ENCODE measurements at regions of chr14 and their contacts with region 1.

Region 1: GRCh38 chr14:26984311-26985177 is 386.7 kb upstream of the NOVA1 start:
- DNase-seq: peak; percentile 78
- ATAC-seq: peak; percentile 90
- H3K4me3 ChIP-seq: no peak overlapping the region
- H3K27ac ChIP-seq: no peak overlapping the region
- H3K4me1 ChIP-seq: no peaks in the 10 kb centered on the region
- H3K27me3 ChIP-seq: peaks cover 19% of the 10 kb centered on the region
- CTCF ChIP-seq: peak; percentile 93

Region 2: GRCh38 chr14:26730929-26731618 is 253.5 kb before region 1 on chr14:
- CTCF ChIA-PET with region 1: no interaction called
- POLR2A ChIA-PET with region 1: no interaction called
- intact Hi-C with region 1: loop called (anchors 5 kb)
- DNase-seq: peak; percentile 41
- ATAC-seq: peak; percentile 70
- H3K4me3 ChIP-seq: no peak overlapping the region
- H3K27ac ChIP-seq: no peak overlapping the region
- H3K4me1 ChIP-seq: no peaks in the 10 kb centered on the region
- H3K27me3 ChIP-seq: no peaks in the 10 kb centered on the region
- CTCF ChIP-seq: peak; percentile 82

Region 3: DNA sequence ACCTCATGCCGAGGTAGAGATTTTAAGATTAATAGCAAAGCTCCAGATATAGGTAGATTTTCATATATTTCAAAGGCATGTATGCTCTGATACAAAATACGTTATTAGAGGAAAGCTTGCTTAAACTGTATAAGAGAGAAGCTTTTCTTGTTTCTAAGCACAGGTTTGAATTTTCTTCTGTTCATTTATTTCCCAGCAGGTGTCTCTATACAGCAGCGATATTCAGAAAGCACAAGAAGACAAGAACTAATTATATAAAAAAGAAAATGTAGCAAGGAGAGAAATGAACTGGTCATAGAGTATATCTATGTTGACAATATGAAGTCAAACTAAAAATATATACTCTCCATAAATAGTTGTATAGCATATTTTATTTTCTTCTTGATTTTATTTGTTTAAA is 79.3 kb before region 1 on chr14:
- CTCF ChIA-PET with region 1: interaction called, 3 read pairs
- POLR2A ChIA-PET with region 1: no interaction called
- intact Hi-C with region 1: loop called (anchors 2 kb)
- DNase-seq: peak; percentile 13
- ATAC-seq: peak; percentile 45; the same call in 1 of the 2 replicates
- H3K4me3 ChIP-seq: no peak overlapping the region
- H3K27ac ChIP-seq: no peak overlapping the region
- H3K4me1 ChIP-seq: no peaks in the 10 kb centered on the region
- H3K27me3 ChIP-seq: no peaks in the 10 kb centered on the region
- CTCF ChIP-seq: no peak; the same call in 1 of the 2 replicates

Region 4: DNA sequence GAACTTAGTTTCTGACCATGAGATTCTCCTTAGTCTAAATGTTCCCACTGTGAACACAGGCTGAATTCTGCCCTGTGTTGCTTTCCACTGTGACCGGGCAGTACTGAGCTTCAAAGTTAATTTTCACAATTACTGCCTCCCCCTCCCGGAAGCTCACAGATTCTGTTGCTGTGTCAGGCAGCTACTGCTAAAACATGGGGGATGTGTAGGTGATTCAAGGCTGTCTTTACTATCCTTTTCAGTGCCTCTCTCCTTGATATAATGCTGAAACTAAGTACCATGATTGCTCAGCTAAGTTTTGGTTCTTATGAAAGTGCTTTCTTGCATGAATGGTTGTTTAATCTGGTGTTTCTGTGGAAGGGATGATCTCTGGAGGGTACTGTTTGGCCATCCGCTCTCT is 41.6 kb after region 1 on chr14:
- CTCF ChIA-PET with region 1: no interaction called
- POLR2A ChIA-PET with region 1: no interaction called
- intact Hi-C with region 1: no loop called
- DNase-seq: no peak
- ATAC-seq: no peak
- H3K4me3 ChIP-seq: no peak overlapping the region
- H3K27ac ChIP-seq: no peak overlapping the region
- H3K4me1 ChIP-seq: no peaks in the 10 kb centered on the region
- H3K27me3 ChIP-seq: no peaks in the 10 kb centered on the region
- CTCF ChIP-seq: no peak

Region 5: DNA sequence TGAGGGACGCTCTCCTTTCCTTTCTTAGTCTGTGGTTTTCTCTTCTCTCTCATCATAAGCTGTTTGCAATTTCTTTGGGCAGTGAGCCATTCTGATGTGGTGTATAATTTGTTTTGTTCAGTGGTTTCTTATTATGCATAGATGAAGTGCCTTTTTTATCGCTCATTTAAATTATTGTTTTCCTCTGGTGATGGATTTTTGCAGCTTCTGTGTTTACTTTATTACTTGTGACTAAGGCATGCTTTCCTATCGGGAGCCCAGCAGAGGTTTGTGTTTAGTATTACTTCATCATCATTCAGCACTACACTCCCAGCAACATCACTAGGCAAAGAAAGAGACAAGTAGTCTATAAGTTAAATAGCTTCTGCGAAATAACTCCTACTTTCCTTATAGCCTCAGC is 199.9 kb after region 1 on chr14:
- CTCF ChIA-PET with region 1: no interaction called
- POLR2A ChIA-PET with region 1: no interaction called
- intact Hi-C with region 1: no loop called
- DNase-seq: peak; percentile 40
- ATAC-seq: peak; percentile 98
- H3K4me3 ChIP-seq: no peak overlapping the region
- H3K27ac ChIP-seq: no peak overlapping the region
- H3K4me1 ChIP-seq: peaks cover 4% of the 10 kb centered on the region; the same call in 1 of the 2 replicates
- H3K27me3 ChIP-seq: no peaks in the 10 kb centered on the region; the same call in 1 of the 2 replicates
- CTCF ChIP-seq: no peak

Region 6: GRCh38 chr14:27327095-27327494 is 342.6 kb after region 1 on chr14:
- CTCF ChIA-PET with region 1: no interaction called
- POLR2A ChIA-PET with region 1: no interaction called
- intact Hi-C with region 1: no loop called
- DNase-seq: no peak
- ATAC-seq: no peak
- H3K4me3 ChIP-seq: no peak overlapping the region
- H3K27ac ChIP-seq: no peak overlapping the region
- H3K4me1 ChIP-seq: no peaks in the 10 kb centered on the region
- H3K27me3 ChIP-seq: no peaks in the 10 kb centered on the region
- CTCF ChIP-seq: no peak

Measured in PC-3 (cell line).